Sigmoid colon (tissue), 7 donors: ENCODE measurements at regions of chr21 and their contacts with region 1.

Region 1: DNA sequence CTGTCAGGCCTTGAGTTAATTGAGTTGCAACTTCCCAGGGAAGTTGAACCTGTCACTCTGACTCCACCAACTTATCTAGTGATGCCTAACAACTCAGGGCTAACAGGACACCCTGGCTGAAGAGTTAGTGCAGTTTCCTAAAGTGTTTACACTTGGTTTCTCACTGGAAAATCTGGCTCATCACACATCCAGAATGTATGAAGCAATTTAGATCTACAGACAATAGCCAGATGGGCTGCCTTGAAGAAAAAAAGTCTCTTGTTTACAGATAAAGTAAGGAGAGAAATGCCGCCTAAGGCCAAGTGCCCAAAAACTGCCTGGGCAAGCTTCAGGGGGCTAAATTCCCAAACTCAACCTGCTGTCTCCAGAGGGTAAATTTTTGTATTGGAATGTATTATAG is 446.3 kb upstream of the NCAM2 start:
- DNase-seq: no peak
- H3K4me3 ChIP-seq: no peak overlapping the region
- H3K27ac ChIP-seq: peak overlapping the region in 3 of 4 donors; percentile 22 to 60 (median 30)
- H3K4me1 ChIP-seq: peaks cover 0 to 48% (median 17%) of the 10 kb centered on the region in 4 donors
- H3K27me3 ChIP-seq: no peaks in the 10 kb centered on the region
- CTCF ChIP-seq: no peak
- EP300 ChIP-seq: peak; percentile 9 to 90 (median 66)
- POLR2A ChIP-seq: no peak

Region 2: DNA sequence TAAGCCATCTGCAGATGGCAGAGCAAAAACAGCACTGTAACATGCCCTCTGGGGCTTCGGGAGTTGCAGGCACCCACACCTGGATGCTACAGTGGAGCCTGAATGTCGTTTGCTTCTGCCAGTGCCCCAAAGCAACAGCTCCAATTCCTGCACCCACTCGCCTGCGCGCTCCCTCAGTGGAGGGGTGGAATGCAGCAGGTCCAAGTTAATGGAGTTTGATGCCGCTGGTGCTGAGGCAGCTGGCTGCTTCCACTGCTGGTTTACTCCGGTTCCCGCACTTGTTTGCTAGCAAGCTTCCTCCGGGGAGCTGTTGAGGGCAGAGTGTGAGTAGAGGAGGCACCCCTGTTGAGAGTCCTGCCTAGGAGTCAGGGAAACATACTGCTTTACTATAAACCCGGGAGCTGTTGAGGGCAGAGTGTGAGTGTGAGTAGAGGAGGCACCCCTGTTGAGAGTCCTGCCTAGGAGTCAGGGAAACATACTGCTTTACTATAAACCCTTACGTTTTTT is 1564.4 kb before region 1 on chr21:
- intact Hi-C with region 1: loop called (anchors 5 kb)
- DNase-seq: no peak
- H3K4me3 ChIP-seq: peak overlapping the region in 2 of 4 donors; percentile 22 to 25
- H3K27ac ChIP-seq: peak overlapping the region in 3 of 4 donors; percentile 78 to 84 (median 79)
- H3K4me1 ChIP-seq: peaks cover 0 to 31% (median 23%) of the 10 kb centered on the region in 4 donors
- H3K27me3 ChIP-seq: no peaks in the 10 kb centered on the region
- CTCF ChIP-seq: no peak
- EP300 ChIP-seq: no peak
- POLR2A ChIP-seq: no peak

Region 3: GRCh38 chr21:20570824-20571232 is 18.9 kb after region 1 on chr21:
- intact Hi-C with region 1: no loop called
- DNase-seq: no peak
- H3K4me3 ChIP-seq: no peak overlapping the region
- H3K27ac ChIP-seq: no peak overlapping the region
- H3K4me1 ChIP-seq: no peaks in the 10 kb centered on the region
- H3K27me3 ChIP-seq: no peaks in the 10 kb centered on the region
- CTCF ChIP-seq: peak in 2 of 4 experiments; percentile 5 to 12
- EP300 ChIP-seq: no peak
- POLR2A ChIP-seq: no peak

Region 4: GRCh38 chr21:20662514-20662913 is 110.6 kb after region 1 on chr21:
- intact Hi-C with region 1: no loop called
- DNase-seq: no peak
- H3K4me3 ChIP-seq: no peak overlapping the region
- H3K27ac ChIP-seq: no peak overlapping the region
- H3K4me1 ChIP-seq: no peaks in the 10 kb centered on the region
- H3K27me3 ChIP-seq: no peaks in the 10 kb centered on the region
- CTCF ChIP-seq: no peak
- EP300 ChIP-seq: no peak
- POLR2A ChIP-seq: no peak